ENCODE measurements at regions of chr2 and their contacts with region 1.

Region 1: GRCh38 chr2:219278655-219279516 is at the start of gene DNAJB2:
- DNase-seq: peak; percentile 98 to 99
- ATAC-seq: peak; percentile 76 to 93 (median 80)
- H3K4me3 ChIP-seq: peak within 1 kb of the TSS; percentile 79
- H3K4me3 Mint-ChIP-seq: peak within 1 kb of the TSS; percentile 94
- H3K27ac ChIP-seq: peak within 1 kb of the TSS; percentile 99
- H3K27ac Mint-ChIP-seq: peak within 1 kb of the TSS; percentile 97 to 99
- H3K4me1 ChIP-seq: peaks cover 30% of the 10 kb centered on the region
- H3K4me1 Mint-ChIP-seq: peaks cover 35 to 47% of the 10 kb centered on the region in 2 donors
- H3K27me3 ChIP-seq: no peaks in the 10 kb centered on the region
- H3K27me3 Mint-ChIP-seq: no peaks in the 10 kb centered on the region
- CTCF ChIP-seq: no peak
- total RNA-seq, gene DNAJB2: 70.3 to 108 (median 98.3) TPM

Region 2: DNA sequence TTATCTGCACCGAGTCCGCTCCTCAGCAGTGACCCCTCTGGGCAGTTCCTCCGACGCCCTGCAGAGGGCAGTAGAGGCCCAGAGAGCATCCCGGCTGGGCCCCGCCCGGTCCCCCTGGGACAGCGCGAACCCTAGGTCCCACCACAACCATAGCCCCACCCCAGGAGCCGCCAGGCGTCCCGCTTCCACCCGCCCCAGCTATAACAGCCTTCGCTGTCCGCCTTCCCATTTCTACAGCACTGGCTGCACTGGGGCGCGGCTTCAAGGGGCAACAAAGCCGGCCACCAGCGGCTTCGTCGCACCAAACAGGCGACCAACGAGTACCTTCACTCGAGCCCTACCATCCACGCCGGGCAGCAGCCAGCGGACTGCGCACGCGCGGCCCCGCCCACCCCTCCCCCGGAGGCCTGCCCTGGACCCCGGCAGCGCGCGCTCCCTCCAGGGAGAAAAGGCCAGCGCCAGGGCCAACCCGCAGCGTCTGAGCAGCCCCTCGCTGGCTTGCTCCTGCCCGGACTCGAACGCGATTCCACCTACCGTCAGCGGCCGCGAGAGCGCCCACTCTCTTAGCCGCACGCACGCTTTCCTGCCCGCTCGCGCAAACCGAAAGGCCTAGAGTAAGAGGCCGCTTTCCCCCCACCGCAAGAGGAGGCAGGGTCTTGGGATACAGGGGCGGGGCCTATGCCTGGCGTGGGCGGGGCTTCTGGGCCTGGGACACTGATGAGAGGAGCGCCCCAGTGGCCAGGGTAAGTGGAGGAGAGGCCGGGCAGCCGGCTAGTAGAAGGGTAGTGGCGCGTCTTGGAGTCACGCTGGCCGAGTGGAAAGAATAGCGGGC is 118.5 kb before region 1 on chr2 and contains the start of gene NHEJ1:
- intact Hi-C with region 1: loop called (anchors 1 kb)
- DNase-seq: peak; percentile 94 to 96
- ATAC-seq: peak; percentile 86 to 98 (median 90)
- H3K4me3 ChIP-seq: peak within 1 kb of the TSS; percentile 76
- H3K4me3 Mint-ChIP-seq: peak within 1 kb of the TSS; percentile 95
- H3K27ac ChIP-seq: peak within 1 kb of the TSS; percentile 80
- H3K27ac Mint-ChIP-seq: peak within 1 kb of the TSS; percentile 92 to 94
- H3K4me1 ChIP-seq: peaks cover 13% of the 10 kb centered on the region
- H3K4me1 Mint-ChIP-seq: peaks cover 16 to 31% of the 10 kb centered on the region in 2 donors
- H3K27me3 ChIP-seq: no peaks in the 10 kb centered on the region
- H3K27me3 Mint-ChIP-seq: no peaks in the 10 kb centered on the region
- CTCF ChIP-seq: peak; percentile 99
- total RNA-seq, gene NHEJ1: 9.9 to 12.7 (median 11.0) TPM

Region 3: GRCh38 chr2:219186754-219187456 is 92.0 kb before region 1 on chr2:
- intact Hi-C with region 1: no loop called
- DNase-seq: no peak
- ATAC-seq: no peak
- H3K4me3 ChIP-seq: no peak overlapping the region
- H3K4me3 Mint-ChIP-seq: no peak overlapping the region
- H3K27ac ChIP-seq: no peak overlapping the region
- H3K27ac Mint-ChIP-seq: no peak overlapping the region
- H3K4me1 ChIP-seq: no peaks in the 10 kb centered on the region
- H3K4me1 Mint-ChIP-seq: peaks cover 0 to 7% of the 10 kb centered on the region in 2 donors
- H3K27me3 ChIP-seq: no peaks in the 10 kb centered on the region
- H3K27me3 Mint-ChIP-seq: no peaks in the 10 kb centered on the region
- CTCF ChIP-seq: no peak

Region 4: DNA sequence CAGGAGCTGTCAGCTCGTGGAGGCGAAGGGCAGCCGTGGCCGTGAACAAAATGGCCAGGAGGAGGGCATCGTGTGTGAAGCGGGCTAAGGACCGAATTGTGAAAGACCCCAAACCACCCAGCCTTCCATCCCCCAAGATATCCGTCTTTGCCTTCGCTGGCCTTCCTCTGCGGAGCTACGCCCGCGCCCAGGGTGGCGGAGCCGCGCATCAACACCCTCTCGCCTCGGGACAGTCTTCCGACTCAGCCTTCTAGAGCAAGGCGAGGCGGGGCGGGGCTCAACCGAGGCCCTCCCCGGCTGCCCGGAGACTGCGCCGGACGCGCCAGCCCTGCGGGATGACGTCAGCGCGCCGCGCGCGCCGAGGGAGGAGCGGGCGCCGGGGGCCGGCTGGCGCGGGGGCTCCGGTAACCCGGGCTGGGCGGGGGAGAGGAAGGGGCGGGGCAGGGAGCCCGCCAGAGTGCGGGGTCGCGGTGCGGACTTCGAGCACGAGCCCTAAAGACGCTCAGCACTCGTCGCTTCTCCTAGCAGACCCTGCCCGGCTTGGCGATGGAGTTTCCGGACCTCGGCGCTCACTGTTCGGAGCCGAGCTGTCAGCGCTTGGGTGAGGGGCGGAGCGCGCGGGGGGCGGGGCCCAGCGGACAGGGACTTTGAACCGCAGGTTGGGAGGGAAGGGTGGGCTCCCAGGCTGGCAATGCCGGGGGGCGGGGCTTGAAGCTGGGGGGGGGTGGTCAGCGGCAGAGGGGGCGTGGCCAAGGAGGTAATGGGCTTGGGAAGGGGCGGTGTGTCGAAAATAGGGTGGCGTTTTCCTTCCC is 72.2 kb before region 1 on chr2 and contains the start of gene ZFAND2B:
- intact Hi-C with region 1: loop called (anchors 1 kb)
- DNase-seq: peak; percentile 96 to 98
- ATAC-seq: peak; percentile 92 to 98 (median 92)
- H3K4me3 ChIP-seq: peak within 1 kb of the TSS; percentile 64
- H3K4me3 Mint-ChIP-seq: peak within 1 kb of the TSS; percentile 90
- H3K27ac ChIP-seq: peak within 1 kb of the TSS; percentile 92
- H3K27ac Mint-ChIP-seq: peak within 1 kb of the TSS; percentile 92 to 98
- H3K4me1 ChIP-seq: peaks cover 52% of the 10 kb centered on the region
- H3K4me1 Mint-ChIP-seq: peaks cover 24 to 33% of the 10 kb centered on the region in 2 donors
- H3K27me3 ChIP-seq: no peaks in the 10 kb centered on the region
- H3K27me3 Mint-ChIP-seq: no peaks in the 10 kb centered on the region
- CTCF ChIP-seq: no peak
- total RNA-seq, gene ZFAND2B: 67.6 to 84.0 (median 83.4) TPM

Region 5: DNA sequence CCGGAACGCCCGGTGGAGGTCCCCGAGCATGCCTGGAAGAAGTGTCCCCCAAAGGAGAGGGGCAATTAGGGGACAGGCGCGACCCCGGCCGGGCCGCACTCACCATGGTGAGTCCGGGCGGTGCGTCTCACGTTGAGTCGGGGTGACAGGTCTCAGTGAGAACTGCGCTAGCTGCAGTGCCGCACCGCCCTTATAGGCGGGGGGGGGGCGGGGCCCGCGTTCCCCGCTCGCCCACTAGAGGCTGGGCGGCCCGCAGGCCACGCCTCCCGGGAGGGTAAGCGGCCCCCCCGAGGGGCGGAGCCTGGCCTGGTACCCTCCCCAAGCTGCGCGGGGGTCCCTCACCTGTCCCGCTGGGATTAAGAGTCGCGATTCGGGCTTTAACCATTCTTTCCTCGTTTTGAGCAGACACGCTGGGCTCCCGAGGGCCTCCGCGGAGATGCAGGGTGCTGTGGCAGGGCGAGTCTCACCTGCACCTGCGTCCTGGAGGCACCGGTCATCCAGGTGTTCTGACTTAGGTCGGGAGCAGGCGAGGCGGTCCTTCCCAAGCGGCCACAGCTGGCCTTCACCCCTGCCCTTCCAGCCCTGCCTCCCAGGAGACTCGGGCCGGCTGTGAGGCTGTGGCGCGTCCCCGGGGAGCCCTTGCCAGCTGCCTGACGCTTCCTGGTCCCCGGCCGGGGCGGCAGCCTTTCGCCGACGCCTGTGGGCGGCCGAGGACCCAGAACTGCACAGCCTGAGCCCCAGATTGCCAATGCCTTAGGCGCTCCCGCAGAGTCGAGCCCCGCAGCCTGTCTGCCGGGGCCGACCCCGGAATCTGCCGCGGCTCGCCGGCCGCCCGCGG is 24.9 kb before region 1 on chr2 and contains the start of gene TUBA4A:
- intact Hi-C with region 1: loop called (anchors 1 kb)
- DNase-seq: peak; percentile 91 to 95
- ATAC-seq: peak; percentile 78 to 92 (median 86)
- H3K4me3 ChIP-seq: peak within 1 kb of the TSS; percentile 93
- H3K4me3 Mint-ChIP-seq: peak within 1 kb of the TSS; percentile 88
- H3K27ac ChIP-seq: peak within 1 kb of the TSS; percentile 97
- H3K27ac Mint-ChIP-seq: peak within 1 kb of the TSS; percentile 86 to 98
- H3K4me1 ChIP-seq: peaks cover 50% of the 10 kb centered on the region
- H3K4me1 Mint-ChIP-seq: peaks cover 29 to 48% of the 10 kb centered on the region in 2 donors
- H3K27me3 ChIP-seq: no peaks in the 10 kb centered on the region
- H3K27me3 Mint-ChIP-seq: peaks cover 0 to 3% of the 10 kb centered on the region in 2 donors
- CTCF ChIP-seq: no peak
- total RNA-seq, gene TUBA4A: 145 to 188 (median 146) TPM

Region 6: GRCh38 chr2:219302376-219302968 is 23.6 kb after region 1 on chr2:
- intact Hi-C with region 1: no loop called
- DNase-seq: no peak
- ATAC-seq: no peak
- H3K4me3 ChIP-seq: no peak overlapping the region
- H3K4me3 Mint-ChIP-seq: no peak overlapping the region
- H3K27ac ChIP-seq: no peak overlapping the region
- H3K27ac Mint-ChIP-seq: no peak overlapping the region
- H3K4me1 ChIP-seq: peaks cover 4% of the 10 kb centered on the region
- H3K4me1 Mint-ChIP-seq: no peaks in the 10 kb centered on the region
- H3K27me3 ChIP-seq: peaks cover 14% of the 10 kb centered on the region
- H3K27me3 Mint-ChIP-seq: peaks cover 31 to 43% of the 10 kb centered on the region in 2 donors
- CTCF ChIP-seq: no peak

Region 7: DNA sequence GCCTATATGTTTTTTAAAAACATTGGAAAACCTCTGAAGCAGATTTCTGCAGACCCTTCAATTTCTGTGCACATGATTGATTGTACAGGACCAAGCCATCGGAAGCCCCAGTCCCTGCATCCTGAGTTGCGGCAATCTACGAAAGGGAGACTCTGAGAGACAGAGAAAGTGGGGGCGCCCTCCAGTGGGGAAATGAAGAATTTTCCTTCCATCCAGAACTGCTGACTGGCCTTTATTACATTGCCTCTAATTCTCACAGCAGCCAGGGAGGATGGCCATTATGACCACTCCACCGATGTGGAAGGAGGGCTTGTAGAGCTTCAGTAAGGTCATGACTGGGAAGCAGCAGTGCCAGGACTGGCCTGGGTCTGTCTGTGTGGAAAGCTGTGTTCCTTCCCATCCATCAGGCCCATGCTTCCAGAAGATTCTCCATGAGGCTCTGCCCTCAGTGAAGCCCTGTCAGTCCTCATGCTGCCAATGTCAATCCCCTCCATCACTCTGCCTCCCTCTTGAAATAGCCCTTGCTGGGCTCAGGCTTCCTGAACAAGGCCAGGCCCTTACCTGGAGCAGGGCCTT is 73.7 kb after region 1 on chr2:
- intact Hi-C with region 1: loop called (anchors 1 kb)
- DNase-seq: peak; percentile 42 to 75
- ATAC-seq: peak; percentile 70 to 82 (median 79)
- H3K4me3 ChIP-seq: no peak overlapping the region
- H3K4me3 Mint-ChIP-seq: no peak overlapping the region
- H3K27ac ChIP-seq: no peak overlapping the region
- H3K27ac Mint-ChIP-seq: no peak overlapping the region
- H3K4me1 ChIP-seq: no peaks in the 10 kb centered on the region
- H3K4me1 Mint-ChIP-seq: peaks cover 0 to 4% of the 10 kb centered on the region in 2 donors
- H3K27me3 ChIP-seq: no peaks in the 10 kb centered on the region
- H3K27me3 Mint-ChIP-seq: peaks cover 25 to 45% of the 10 kb centered on the region in 2 donors
- CTCF ChIP-seq: peak; percentile 80

Region 8: DNA sequence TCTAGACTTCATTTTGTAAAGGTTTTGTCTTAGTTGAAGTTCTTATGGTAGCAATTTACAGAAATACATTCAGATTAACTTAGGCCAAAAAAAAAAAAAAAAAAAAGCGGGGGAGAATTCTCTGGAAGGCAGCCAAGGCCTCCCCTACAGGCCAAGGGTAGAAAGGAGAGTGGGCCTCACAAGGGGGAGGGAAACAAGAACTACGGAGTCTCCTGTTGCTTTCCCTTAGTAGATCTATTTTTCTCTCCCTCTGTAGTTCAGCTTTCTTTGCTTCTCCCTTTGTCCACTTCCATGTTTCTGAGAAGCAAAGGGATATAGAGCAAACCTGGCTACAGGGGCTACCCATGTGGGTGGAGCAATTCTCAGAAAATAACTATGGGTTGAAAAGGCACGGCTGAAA is 316.4 kb after region 1 on chr2:
- intact Hi-C with region 1: no loop called
- DNase-seq: no peak
- ATAC-seq: no peak
- H3K4me3 ChIP-seq: no peak overlapping the region
- H3K4me3 Mint-ChIP-seq: peak overlapping the region; percentile 60
- H3K27ac ChIP-seq: no peak overlapping the region
- H3K27ac Mint-ChIP-seq: no peak overlapping the region
- H3K4me1 ChIP-seq: peaks cover 11% of the 10 kb centered on the region
- H3K4me1 Mint-ChIP-seq: peaks cover 25 to 26% of the 10 kb centered on the region in 2 donors
- H3K27me3 ChIP-seq: no peaks in the 10 kb centered on the region
- H3K27me3 Mint-ChIP-seq: peaks cover 10 to 19% of the 10 kb centered on the region in 2 donors
- CTCF ChIP-seq: no peak